CD4-positive, alpha-beta memory T cell (primary cell): ENCODE measurements at regions of chr21 and their contacts with region 1.

Region 1: DNA sequence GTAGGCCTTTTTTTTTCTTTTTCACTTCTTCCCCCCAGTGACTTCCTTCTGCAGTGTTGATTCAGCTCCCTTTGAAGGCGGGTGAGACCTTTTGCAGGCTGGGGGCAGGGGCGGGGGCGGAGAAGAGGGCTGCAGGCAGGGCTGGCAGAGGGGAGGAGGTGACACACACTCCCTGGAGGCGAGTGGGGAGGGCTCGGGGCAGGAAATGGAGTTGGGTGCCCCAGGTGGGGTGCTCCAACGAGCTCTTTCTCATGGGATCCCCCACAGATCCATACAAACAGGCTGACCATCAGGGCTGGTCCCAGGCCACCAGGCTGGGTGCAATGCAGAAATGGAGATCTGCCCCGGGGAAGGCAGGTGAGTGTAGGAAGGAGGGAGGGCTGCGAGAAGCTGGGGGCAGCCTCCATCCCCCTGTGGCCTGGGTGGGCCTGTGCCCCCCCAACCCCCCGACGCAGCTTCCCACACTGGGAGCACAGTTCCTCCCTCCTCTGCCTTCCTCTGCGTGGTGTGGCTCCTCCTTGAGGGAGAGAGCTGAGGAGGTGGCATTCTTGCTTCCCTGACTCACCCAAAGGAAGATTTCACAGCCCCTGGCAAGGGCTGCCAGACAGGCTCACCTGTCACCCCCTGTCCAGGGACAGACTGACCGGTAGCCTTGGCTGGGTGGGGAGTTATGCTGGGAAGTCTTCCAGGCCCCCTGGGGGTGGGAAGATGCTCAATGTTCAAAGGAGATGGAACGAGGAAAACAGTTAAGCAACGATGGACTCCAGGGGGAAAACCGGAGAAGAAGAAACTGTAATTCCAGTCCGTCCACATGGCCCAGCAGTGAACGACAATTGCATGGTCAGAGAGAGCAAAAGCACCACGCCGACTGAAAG is 7.1 kb upstream of the ITGB2 start:
- DNase-seq: peak; percentile 77 to 96 (median 82)
- H3K4me3 ChIP-seq: peak overlapping the region; percentile 66 to 88
- H3K4me3 Mint-ChIP-seq: peak overlapping the region; percentile 85 to 97 (median 94)
- H3K27ac ChIP-seq: peak overlapping the region; percentile 84
- H3K27ac Mint-ChIP-seq: peak overlapping the region; percentile 93 to 99 (median 95)
- H3K4me1 ChIP-seq: peaks cover 86% of the 10 kb centered on the region
- H3K4me1 Mint-ChIP-seq: peaks cover 56 to 84% (median 72%) of the 10 kb centered on the region in 4 donors
- H3K27me3 ChIP-seq: no peaks in the 10 kb centered on the region
- H3K27me3 Mint-ChIP-seq: no peaks in the 10 kb centered on the region

Region 2: DNA sequence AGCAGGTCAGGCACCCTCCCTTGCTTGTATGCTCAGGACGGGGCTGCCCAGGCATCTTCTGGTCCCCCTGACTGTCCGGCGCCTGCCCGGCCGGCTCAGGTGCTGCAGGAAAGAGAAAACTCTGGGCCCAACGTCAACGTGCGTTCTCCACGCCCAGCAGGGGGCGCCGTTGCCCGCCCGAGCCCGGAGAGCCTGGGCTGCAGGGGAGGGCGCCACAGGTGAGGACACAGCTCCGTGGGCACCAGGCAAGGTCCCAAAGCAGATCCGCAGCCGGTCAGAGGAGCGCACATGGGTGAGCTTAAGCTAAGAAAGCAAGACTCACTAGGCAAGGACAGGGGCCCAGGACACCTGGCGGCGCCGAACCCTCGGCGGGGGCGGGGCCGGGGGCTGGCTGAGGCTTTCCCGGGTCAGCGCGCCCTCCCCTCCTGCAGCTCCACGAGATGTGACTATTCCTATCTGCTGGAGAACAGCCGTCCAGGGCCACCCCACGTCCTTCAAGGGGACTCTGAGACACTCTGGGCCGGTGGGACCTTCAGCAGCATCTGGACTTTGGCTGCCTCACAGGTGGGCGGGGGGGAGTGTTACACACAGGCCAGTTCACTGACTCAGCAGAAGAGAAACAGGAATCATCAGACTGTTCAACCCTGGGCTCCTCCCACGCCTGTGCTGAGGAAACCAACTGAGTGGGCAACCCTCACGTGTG is 417.2 kb before region 1 on chr21:
- CTCF ChIA-PET with region 1: no interaction called
- POLR2A ChIA-PET with region 1: no interaction called
- intact Hi-C with region 1: loop called (anchors 2 kb)
- DNase-seq: peak; percentile 75 to 84 (median 81)
- H3K4me3 ChIP-seq: peak overlapping the region in 1 of 2 donors; percentile 51
- H3K4me3 Mint-ChIP-seq: peak overlapping the region in 7 of 8 donors; percentile 36 to 77 (median 67)
- H3K27ac ChIP-seq: no peak overlapping the region
- H3K27ac Mint-ChIP-seq: no peak overlapping the region
- H3K4me1 ChIP-seq: peaks cover 10% of the 10 kb centered on the region
- H3K4me1 Mint-ChIP-seq: peaks cover 0 to 1% (median 0%) of the 10 kb centered on the region in 4 donors
- H3K27me3 ChIP-seq: no peaks in the 10 kb centered on the region
- H3K27me3 Mint-ChIP-seq: no peaks in the 10 kb centered on the region

Region 3: GRCh38 chr21:44752634-44753291 is 175.1 kb before region 1 on chr21:
- CTCF ChIA-PET with region 1: no interaction called
- POLR2A ChIA-PET with region 1: no interaction called
- intact Hi-C with region 1: no loop called
- DNase-seq: no peak
- H3K4me3 ChIP-seq: no peak overlapping the region
- H3K4me3 Mint-ChIP-seq: no peak overlapping the region
- H3K27ac ChIP-seq: no peak overlapping the region
- H3K27ac Mint-ChIP-seq: no peak overlapping the region
- H3K4me1 ChIP-seq: no peaks in the 10 kb centered on the region
- H3K4me1 Mint-ChIP-seq: peaks cover 0 to 1% (median 0%) of the 10 kb centered on the region in 4 donors
- H3K27me3 ChIP-seq: no peaks in the 10 kb centered on the region
- H3K27me3 Mint-ChIP-seq: peaks cover 10 to 11% of the 10 kb centered on the region in 2 donors

Region 4: GRCh38 chr21:44817506-44817880 is 110.3 kb before region 1 on chr21:
- CTCF ChIA-PET with region 1: no interaction called
- POLR2A ChIA-PET with region 1: interaction called, 8 read pairs
- intact Hi-C with region 1: loop called (anchors 1 kb)
- DNase-seq: peak; percentile 89 to 91 (median 91)
- H3K4me3 ChIP-seq: peak overlapping the region in 1 of 2 donors; percentile 57
- H3K4me3 Mint-ChIP-seq: peak overlapping the region; percentile 23 to 80 (median 58)
- H3K27ac ChIP-seq: no peak overlapping the region
- H3K27ac Mint-ChIP-seq: peak overlapping the region in 3 of 7 donors; percentile 17 to 48 (median 31)
- H3K4me1 ChIP-seq: peaks cover 16% of the 10 kb centered on the region
- H3K4me1 Mint-ChIP-seq: peaks cover 1 to 34% (median 16%) of the 10 kb centered on the region in 4 donors
- H3K27me3 ChIP-seq: no peaks in the 10 kb centered on the region
- H3K27me3 Mint-ChIP-seq: no peaks in the 10 kb centered on the region

Region 5: DNA sequence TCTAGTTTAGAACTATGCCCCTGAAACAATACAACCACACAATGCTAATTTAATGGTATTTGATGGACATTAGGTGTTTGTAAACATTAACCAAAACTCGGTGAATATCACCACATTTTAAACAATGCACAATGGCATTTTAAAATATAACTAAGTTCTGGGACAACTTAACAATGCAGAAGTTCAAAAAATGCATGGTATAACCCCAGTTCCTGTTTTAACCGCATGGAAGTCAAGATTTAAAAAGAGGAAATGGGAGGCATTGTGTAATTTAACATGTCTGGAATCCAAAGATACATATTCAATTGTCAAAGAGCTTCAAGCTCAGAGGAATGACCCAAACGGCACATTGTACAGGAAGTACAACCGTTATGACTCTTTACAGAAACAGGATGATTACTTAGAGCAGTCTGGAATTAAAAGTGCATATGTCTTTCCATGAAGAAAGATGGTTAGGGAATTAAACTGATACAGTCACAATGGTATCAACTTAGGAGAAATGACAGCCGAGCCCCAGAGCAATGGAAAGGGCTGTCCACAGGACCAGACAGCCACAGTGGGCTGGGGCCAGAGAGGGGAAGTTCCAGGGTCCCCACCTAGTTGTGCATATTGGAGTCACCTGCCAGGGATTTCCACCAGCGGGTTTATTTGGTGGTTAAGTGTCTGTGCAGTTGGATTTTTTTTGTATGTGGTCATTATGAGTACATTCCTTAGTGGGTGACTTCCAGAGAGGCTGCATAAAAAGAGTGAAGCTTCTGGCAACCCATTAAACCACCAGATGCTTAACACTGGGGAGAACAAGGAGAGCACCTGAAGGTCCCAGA is 46.9 kb before region 1 on chr21:
- CTCF ChIA-PET with region 1: interaction called, 14 read pairs
- POLR2A ChIA-PET with region 1: interaction called, 267 read pairs
- intact Hi-C with region 1: no loop called
- DNase-seq: peak in 1 of 5 donors; percentile 79
- H3K4me3 ChIP-seq: no peak overlapping the region
- H3K4me3 Mint-ChIP-seq: peak overlapping the region in 4 of 8 donors; percentile 6 to 45 (median 26)
- H3K27ac ChIP-seq: peak overlapping the region; percentile 20
- H3K27ac Mint-ChIP-seq: peak overlapping the region; percentile 9 to 88 (median 76)
- H3K4me1 ChIP-seq: peaks cover 28% of the 10 kb centered on the region
- H3K4me1 Mint-ChIP-seq: peaks cover 17 to 33% (median 23%) of the 10 kb centered on the region in 4 donors
- H3K27me3 ChIP-seq: no peaks in the 10 kb centered on the region
- H3K27me3 Mint-ChIP-seq: no peaks in the 10 kb centered on the region

Region 6: DNA sequence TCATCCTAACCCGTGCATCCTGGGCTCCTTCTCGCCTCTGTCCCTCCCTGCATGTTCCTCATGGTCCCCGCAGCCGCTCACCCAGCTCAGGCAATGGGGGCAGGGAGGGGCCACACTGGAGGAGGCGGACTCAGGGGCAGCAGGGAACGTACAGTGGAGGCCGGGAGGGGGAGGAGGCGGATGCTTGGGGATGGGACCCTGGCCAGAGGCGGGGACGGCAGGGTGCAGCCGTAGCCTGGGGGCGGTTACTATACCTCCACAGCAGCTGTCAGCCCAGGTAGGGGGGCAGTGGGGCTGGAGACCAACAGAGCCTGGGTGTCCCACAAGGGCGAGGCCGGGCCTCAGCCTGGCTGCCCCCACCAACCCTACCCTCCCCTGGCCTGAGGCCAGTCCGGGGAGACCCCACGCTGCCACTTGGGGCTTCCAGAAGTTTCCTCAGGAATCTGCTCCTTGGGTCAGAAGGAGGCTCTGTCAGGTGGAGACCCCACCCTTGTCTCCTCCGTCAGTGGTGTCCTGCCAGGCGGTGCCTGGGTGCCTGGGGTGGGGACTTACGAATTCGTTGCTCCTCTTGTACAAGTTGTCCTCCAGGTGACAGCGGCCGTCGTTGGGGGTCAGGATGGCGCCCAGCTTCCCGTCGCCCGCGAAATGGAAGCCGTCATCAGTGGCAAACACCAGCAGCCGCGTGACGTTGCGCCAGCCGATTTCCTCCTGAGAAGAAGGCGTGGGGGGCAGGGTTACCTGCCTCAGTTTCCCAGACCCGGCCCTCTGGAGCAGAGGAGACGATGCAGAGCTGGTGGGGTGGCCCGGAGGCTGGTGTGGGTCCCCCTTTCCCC is 27.8 kb before region 1 on chr21:
- CTCF ChIA-PET with region 1: interaction called, 253 read pairs
- POLR2A ChIA-PET with region 1: interaction called, 756 read pairs
- intact Hi-C with region 1: no loop called
- DNase-seq: no peak
- H3K4me3 ChIP-seq: no peak overlapping the region
- H3K4me3 Mint-ChIP-seq: no peak overlapping the region
- H3K27ac ChIP-seq: no peak overlapping the region
- H3K27ac Mint-ChIP-seq: no peak overlapping the region
- H3K4me1 ChIP-seq: peaks cover 13% of the 10 kb centered on the region
- H3K4me1 Mint-ChIP-seq: peaks cover 11 to 28% (median 18%) of the 10 kb centered on the region in 4 donors
- H3K27me3 ChIP-seq: no peaks in the 10 kb centered on the region
- H3K27me3 Mint-ChIP-seq: no peaks in the 10 kb centered on the region

Region 7: DNA sequence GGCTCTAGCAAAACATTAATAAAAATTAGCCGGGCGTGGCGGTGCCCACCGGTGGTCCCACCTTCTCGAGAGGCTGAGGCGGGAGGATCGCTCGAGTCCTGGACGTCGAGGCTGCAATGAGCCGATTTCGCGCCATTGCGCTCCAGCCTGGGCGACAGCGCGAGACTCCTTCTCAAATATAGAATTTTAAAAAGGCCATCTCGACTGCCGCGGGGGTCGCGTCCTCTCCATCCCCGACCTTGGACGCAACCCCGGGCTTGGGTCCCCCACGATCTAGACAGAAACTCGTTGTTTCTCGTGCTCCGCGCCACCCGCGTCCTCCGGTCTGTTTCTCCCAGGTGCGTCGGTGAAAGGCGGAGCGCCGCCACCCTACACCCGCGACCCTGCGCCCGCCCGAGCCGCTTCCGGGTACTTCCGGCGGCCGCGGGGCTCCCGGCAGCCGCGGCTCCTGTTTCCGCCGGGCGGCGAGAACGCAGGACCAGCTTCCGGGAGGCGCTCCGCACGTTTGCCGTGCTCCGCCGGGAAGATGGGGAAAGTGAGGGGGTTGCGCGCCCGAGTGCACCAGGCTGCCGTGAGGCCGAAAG is 11.8 kb after region 1 on chr21 and contains the start of gene SLX9:
- CTCF ChIA-PET with region 1: interaction called, 3 read pairs
- POLR2A ChIA-PET with region 1: interaction called, 19 read pairs
- intact Hi-C with region 1: no loop called
- DNase-seq: peak; percentile 69 to 82 (median 76)
- H3K4me3 ChIP-seq: peak within 1 kb of the TSS; percentile 36 to 57
- H3K4me3 Mint-ChIP-seq: peak within 1 kb of the TSS; percentile 86 to 97 (median 90)
- H3K27ac ChIP-seq: peak within 1 kb of the TSS; percentile 46
- H3K27ac Mint-ChIP-seq: peak within 1 kb of the TSS; percentile 53 to 96 (median 88)
- H3K4me1 ChIP-seq: peaks cover 38% of the 10 kb centered on the region
- H3K4me1 Mint-ChIP-seq: peaks cover 23 to 56% (median 40%) of the 10 kb centered on the region in 4 donors
- H3K27me3 ChIP-seq: no peaks in the 10 kb centered on the region
- H3K27me3 Mint-ChIP-seq: no peaks in the 10 kb centered on the region
- total RNA-seq, gene SLX9: 17.7 to 21.6 TPM

Region 8: DNA sequence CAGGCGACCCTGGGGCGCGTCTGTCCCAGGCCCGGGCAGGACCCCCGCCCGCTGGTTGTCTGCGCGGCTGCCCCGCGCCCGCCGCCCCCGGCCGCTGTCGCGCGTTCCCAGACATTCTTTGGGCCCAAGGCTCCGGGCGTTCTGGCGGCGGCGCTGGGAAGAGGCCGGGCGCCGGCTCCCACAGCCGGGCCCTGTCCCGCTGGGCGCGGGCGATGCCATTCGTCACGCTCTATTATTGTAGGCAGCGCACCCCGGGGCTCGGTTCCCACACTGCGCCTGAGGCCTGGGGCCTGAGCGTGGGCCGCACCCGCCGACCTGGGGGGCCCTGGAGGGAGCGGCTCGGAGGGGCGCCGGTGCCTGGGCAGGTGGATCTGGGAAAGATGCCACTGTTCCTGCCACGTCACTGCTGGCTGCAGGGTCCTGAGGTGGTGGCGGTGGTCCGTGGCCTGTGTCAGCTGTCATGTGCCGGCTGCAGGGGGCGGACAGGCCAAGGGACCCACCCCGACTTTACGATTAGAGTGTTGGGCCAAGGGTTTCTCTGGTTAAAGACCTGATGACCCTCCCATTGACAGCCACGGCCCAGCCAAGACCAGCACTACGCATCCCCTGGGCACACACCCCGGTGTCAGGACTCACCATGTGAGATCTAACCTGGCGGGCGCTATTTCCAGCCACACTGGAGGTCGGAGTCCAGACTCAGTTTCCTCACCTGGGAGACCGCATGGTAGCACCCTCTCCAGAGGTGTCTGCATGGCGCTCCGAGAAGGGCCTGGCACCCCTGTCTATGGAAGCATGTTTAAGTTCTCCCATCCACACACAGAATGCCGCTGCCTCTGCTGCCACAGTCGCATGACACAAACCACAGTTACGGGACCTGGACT is 91.5 kb after region 1 on chr21:
- CTCF ChIA-PET with region 1: no interaction called
- POLR2A ChIA-PET with region 1: no interaction called
- intact Hi-C with region 1: no loop called
- DNase-seq: no peak
- H3K4me3 ChIP-seq: no peak overlapping the region
- H3K4me3 Mint-ChIP-seq: peak overlapping the region in 6 of 8 donors; percentile 13 to 62 (median 36)
- H3K27ac ChIP-seq: no peak overlapping the region
- H3K27ac Mint-ChIP-seq: no peak overlapping the region
- H3K4me1 ChIP-seq: peaks cover 6% of the 10 kb centered on the region
- H3K4me1 Mint-ChIP-seq: peaks cover 4 to 9% (median 7%) of the 10 kb centered on the region in 4 donors
- H3K27me3 ChIP-seq: peaks cover 12% of the 10 kb centered on the region
- H3K27me3 Mint-ChIP-seq: peaks cover 30 to 39% of the 10 kb centered on the region in 2 donors